CD4-positive, alpha-beta memory T cell (primary cell): ENCODE measurements at regions of chr7 and their contacts with region 1.

Region 1: GRCh38 chr7:80764132-80764531 is 125.7 kb downstream of the CD36 start:
- DNase-seq: no peak
- H3K4me3 ChIP-seq: no peak overlapping the region
- H3K4me3 Mint-ChIP-seq: no peak overlapping the region
- H3K27ac ChIP-seq: no peak overlapping the region
- H3K27ac Mint-ChIP-seq: no peak overlapping the region
- H3K4me1 ChIP-seq: no peaks in the 10 kb centered on the region
- H3K4me1 Mint-ChIP-seq: no peaks in the 10 kb centered on the region
- H3K27me3 ChIP-seq: no peaks in the 10 kb centered on the region
- H3K27me3 Mint-ChIP-seq: no peaks in the 10 kb centered on the region

Region 2: DNA sequence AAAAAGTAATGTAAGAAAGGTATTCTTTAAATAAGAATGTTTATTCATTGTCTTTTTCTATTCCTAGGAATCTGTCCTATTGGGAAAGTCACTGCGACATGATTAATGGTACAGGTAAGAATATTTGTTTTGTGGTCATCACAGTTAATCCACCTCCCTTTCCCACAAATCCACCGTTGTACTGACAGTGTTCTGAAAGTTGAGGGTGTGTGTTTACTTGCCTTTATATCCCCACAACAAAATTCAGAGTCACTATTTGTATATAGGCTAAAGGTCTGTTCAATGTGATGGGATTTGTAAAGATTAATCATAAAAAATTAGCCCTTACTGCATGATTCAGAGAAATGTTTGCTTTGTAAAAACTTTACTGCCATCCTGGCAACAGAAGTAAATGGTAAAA is 97.8 kb before region 1 on chr7:
- CTCF ChIA-PET with region 1: no interaction called
- POLR2A ChIA-PET with region 1: no interaction called
- intact Hi-C with region 1: no loop called
- DNase-seq: no peak
- H3K4me3 ChIP-seq: no peak overlapping the region
- H3K4me3 Mint-ChIP-seq: no peak overlapping the region
- H3K27ac ChIP-seq: no peak overlapping the region
- H3K27ac Mint-ChIP-seq: no peak overlapping the region
- H3K4me1 ChIP-seq: no peaks in the 10 kb centered on the region
- H3K4me1 Mint-ChIP-seq: no peaks in the 10 kb centered on the region
- H3K27me3 ChIP-seq: no peaks in the 10 kb centered on the region
- H3K27me3 Mint-ChIP-seq: no peaks in the 10 kb centered on the region

Region 3: DNA sequence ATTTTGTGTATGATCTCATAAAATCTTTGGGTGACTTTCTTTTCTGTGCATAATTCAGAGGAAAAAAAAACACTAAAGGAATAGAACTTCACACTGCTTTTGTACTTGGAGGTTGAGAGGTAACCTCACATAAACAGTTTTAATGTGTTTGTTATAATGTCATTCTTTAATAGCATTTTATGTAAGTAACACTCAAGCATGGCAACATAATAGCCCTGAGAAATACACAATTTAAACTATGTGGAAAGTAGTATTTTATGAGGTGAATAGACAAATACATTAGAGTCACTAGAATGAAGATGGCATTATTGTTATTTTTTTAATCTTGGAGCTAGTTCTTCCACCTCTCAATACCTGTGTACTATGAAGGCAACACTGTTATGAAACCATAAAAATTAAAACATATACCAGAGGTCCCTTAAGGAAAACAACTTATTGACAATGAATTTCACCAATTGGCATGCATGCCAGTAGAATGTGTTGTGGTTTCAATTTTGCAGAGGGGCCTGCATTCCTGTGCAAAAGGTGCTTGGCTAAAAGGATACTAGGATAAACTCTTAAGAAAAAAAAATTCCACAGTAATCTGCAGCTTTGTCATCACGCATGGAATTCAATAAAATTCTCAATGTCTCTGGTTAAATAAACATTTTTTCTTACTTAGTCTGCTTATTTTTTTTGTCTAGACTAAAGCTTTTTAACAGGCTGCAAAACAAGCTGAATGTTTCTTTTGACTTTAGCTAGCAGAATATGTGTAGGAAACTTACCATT is 23.2 kb before region 1 on chr7:
- CTCF ChIA-PET with region 1: no interaction called
- POLR2A ChIA-PET with region 1: no interaction called
- intact Hi-C with region 1: loop called (anchors 1 kb)
- DNase-seq: no peak
- H3K4me3 ChIP-seq: no peak overlapping the region
- H3K4me3 Mint-ChIP-seq: no peak overlapping the region
- H3K27ac ChIP-seq: no peak overlapping the region
- H3K27ac Mint-ChIP-seq: no peak overlapping the region
- H3K4me1 ChIP-seq: no peaks in the 10 kb centered on the region
- H3K4me1 Mint-ChIP-seq: no peaks in the 10 kb centered on the region
- H3K27me3 ChIP-seq: no peaks in the 10 kb centered on the region
- H3K27me3 Mint-ChIP-seq: no peaks in the 10 kb centered on the region

Region 4: DNA sequence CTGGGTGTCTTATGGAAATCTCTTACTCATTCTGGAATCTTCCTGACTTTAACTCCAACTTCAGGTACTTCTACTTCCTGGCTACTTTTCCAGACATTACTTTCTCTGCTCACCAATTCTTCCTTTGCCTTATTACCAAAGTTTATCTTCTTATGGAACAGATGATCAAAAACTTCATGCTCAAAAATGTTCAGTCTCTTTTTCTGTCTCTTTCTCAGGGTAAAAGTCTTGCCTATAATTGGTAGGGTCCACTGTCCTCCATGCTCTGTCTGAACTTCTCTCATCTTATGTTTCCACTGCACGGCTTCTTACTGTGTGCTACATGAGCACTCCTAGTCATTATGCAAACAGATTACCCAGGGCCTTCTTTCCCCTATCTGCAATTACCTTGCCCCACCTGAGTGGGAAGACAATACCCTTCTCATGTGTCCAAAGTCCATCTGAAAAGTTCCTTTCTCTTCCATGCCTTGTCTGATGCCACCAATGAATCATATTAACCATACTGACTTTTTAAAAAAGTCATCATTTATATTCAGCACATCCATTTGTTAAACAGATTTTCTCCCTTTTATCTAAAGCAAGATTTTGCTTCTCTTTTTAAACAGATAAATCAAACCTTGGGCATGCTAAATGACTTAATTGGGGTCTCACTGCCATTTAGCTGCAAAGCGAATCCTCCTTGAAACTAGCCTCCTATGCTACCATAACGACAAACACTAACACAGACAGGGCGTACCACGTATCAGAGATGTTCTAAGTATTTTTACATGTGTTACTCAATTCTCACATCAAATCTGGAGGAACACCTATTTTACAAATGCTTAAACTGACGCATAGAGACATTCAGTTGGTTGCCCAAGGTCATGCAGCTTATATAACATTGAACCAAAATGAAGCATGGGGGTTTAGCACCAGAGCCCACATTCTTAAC is 106.0 kb after region 1 on chr7:
- CTCF ChIA-PET with region 1: no interaction called
- POLR2A ChIA-PET with region 1: no interaction called
- intact Hi-C with region 1: no loop called
- DNase-seq: no peak
- H3K4me3 ChIP-seq: no peak overlapping the region
- H3K4me3 Mint-ChIP-seq: no peak overlapping the region
- H3K27ac ChIP-seq: no peak overlapping the region
- H3K27ac Mint-ChIP-seq: no peak overlapping the region
- H3K4me1 ChIP-seq: no peaks in the 10 kb centered on the region
- H3K4me1 Mint-ChIP-seq: no peaks in the 10 kb centered on the region
- H3K27me3 ChIP-seq: no peaks in the 10 kb centered on the region
- H3K27me3 Mint-ChIP-seq: no peaks in the 10 kb centered on the region